ENCODE measurements at regions of chr4 and their contacts with region 1.

Region 1: DNA sequence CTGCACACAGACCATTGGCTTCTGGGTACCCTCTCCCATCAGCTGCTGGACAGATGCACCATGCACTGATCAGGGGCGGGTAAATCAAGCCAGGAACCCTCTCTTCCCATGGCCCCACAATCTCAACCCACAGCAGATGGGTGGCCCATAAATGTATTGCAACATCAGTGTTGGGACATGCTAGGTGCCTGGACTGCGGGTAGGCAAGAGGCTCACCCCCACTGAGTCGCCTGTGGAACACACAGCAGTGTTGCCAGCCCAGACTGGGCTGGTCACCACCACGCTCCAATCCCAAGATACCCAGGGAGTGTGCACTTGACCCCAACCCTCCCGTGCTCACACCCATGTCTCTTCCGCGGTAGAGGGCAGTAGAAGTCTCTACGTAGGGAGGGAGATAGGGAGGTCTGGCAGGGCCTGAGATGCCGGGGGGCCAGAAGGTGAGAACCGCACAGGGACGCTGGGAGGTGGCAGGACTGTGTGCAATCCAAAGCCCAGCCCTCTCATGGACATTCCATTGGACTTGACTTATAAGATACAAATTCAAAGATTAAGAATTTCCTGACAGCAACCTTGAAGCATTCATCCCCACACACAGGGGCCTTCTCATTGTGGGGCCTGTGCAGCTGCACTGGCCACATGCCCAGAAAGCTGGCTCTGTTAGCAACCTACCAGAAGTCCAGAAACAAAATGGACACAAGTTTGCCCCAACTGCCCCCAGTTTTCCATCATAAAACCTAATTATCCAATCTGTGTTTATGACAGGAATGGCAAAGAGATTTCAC is 183.7 kb downstream of the NSUN7 start:
- DNase-seq: no peak

Region 2: DNA sequence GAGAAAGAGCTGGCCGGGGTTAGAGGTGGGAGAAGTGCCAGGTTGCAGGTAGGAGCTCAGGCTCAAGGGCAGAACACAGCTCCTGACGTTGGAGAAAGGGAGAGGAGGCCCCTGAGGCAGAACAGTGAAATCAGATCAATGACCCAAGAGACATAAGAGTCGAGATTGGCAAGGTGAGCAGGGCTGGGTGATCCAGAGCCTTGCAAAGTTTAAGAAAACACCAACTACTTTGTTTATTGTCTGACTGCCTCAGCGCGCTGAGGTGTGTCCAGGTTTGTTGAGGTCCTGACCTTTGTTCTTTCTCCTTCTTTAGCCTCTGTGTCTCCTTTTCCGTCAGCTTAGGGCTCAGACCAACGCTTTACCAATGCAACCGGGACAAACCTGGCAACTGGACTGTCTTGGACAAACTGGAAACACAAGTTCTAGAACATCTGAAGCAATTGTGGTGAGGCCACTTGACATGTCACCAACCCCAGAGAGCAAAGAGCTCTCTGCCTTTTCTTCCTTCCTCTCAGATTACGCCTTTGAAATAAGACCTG is 570.0 kb before region 1 on chr4:
- in situ Hi-C with region 1: no loop called
- DNase-seq: no peak

Region 3: DNA sequence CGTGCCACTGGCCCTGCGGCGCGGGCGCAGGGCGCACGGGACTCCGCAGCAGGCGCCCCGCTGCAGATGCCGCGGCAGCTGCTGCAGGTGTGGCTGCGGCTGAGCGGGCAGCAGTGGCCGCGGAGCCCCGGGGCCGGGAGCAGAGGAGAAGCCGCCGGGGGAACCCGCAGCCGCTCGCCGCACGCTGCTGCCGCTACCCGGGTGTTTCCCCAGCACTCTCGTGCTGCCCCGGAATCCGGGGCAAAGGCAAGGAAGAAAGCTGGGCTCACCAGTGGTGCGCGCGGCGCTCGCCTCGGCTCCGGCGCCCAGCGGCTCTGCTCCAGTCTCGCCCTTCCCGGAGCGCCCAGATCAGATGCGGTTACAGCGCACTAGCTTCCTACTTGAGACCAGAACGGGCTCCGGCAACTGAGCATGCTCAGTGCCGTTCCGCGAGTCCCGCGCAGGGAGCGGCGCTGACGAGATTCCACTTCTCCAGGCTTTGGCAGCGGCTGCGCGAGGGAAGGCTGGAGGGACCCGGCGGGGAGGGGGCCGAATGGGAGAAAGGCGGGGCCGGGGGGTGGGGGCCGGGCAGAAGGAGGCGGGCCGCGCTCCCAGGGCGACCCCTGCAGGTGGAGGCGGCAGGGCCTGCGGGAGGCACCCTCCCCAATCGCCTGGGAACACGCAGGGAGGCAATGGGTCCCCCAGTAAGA is 280.8 kb after region 1 on chr4 and contains the start of gene APBB2:
- in situ Hi-C with region 1: loop called (anchors 25 kb)
- DNase-seq: peak; percentile 96